Right ventricle myocardium superior (tissue), 1 donor: ENCODE measurements at regions of chr10 and their contacts with region 1.

Region 1: GRCh38 chr10:71888623-71889387 is 37.8 kb upstream of the PSAP start:
- DNase-seq: peak; percentile 91
- ATAC-seq: peak; percentile 95

Region 2: GRCh38 chr10:70283445-70284399 is 1605.1 kb before region 1 on chr10 and contains the start of gene NPFFR1:
- intact Hi-C with region 1: no loop called
- DNase-seq: no peak
- ATAC-seq: peak; percentile 65
- total RNA-seq, gene NPFFR1: 0.03 TPM

Region 3: GRCh38 chr10:71045204-71045809 is 843.5 kb before region 1 on chr10:
- intact Hi-C with region 1: no loop called
- DNase-seq: peak; percentile 63
- ATAC-seq: peak; percentile 32

Region 4: DNA sequence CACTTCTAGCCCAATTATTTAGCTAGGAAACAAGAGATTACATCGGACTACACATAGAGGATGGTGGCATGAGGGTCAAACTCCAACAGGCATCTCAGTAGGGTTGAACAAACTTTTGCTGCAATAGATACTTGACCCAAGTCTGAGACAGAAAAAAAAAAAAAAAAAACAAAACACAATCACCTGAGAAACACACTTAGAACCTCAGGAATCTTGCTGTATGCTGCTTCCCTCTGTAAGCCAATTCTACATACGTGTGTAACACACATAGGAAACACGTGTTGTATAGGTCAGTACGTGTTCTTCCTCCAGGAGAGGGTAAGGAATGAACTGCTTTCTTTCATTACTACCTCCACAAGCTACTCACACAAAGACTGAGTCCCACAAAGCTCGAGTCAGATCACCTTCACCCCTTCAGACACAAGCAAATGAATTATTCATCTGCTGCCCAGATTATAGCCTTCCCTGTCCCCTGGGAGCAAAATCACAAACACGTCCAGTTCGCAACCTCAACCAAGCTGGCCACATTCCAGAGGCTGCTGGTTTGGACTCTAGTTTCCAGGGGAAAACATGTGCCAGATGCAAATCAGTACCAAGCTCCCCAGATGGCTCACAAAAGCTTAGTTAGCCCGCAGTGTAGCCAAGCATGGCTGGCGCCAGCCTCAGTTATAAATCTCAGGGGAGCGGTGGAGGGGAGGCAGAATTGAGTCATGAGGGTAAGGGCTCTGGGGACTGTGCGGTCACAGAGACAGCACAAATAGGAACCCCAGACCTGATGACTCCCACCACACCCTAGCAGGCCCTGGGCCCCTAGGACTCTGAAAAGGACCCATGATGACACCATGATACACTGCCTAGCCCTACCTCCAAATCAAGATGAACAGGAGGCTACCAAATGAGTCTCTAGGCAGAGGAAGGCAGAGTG is 52.9 kb before region 1 on chr10:
- intact Hi-C with region 1: loop called (anchors 2 kb)
- DNase-seq: peak; percentile 81
- ATAC-seq: peak; percentile 36

Region 5: GRCh38 chr10:72061491-72061890 is 172.7 kb after region 1 on chr10:
- intact Hi-C with region 1: no loop called
- DNase-seq: no peak
- ATAC-seq: no peak

Region 6: DNA sequence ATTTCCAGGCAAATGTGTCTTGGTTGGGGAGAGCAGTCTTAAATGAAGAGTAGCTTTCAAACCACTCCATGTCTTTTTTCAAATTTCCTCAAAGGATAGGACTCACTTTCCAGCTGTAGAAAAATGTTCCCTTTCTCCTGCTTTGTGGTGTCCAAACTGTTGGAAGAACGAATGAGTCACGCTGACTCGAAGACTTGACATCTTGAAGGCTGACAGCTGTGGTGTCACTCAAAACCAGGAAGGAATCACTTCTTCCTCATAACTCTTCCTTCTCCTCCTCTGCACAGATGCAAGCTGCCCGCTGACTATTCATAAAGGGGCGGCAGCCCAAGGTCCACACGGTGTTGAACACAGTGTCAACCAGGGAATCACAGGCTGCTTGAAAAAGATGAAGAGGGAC is 1046.6 kb after region 1 on chr10:
- intact Hi-C with region 1: no loop called
- DNase-seq: no peak
- ATAC-seq: no peak